Dendritic cell treated with granulocyte-macrophage colony-stimulating factor and Interleukin-4, amounts not matched to agents 40 ng/mL and 50 ng/mL, for 4 days (primary cell): ENCODE measurements at regions of chr16 and their contacts with region 1.

Region 1: GRCh38 chr16:29129514-29129913 is 144.7 kb downstream of the LAT start:
- H3K4me3 Mint-ChIP-seq: peak overlapping the region; percentile 23
- H3K27ac Mint-ChIP-seq: no peak overlapping the region
- H3K4me1 Mint-ChIP-seq: peaks cover 64% of the 10 kb centered on the region
- H3K27me3 Mint-ChIP-seq: peaks cover 45% of the 10 kb centered on the region

Region 2: GRCh38 chr16:29112755-29113347 is 16.7 kb before region 1 on chr16:
- intact Hi-C with region 1: loop called (anchors 1 kb)
- H3K4me3 Mint-ChIP-seq: no peak overlapping the region
- H3K27ac Mint-ChIP-seq: no peak overlapping the region
- H3K4me1 Mint-ChIP-seq: peaks cover 41% of the 10 kb centered on the region
- H3K27me3 Mint-ChIP-seq: peaks cover 23% of the 10 kb centered on the region

Region 3: GRCh38 chr16:29192325-29193247 is 63.1 kb after region 1 on chr16:
- intact Hi-C with region 1: loop called (anchors 5 kb)
- H3K4me3 Mint-ChIP-seq: no peak overlapping the region
- H3K27ac Mint-ChIP-seq: no peak overlapping the region
- H3K4me1 Mint-ChIP-seq: peaks cover 9% of the 10 kb centered on the region
- H3K27me3 Mint-ChIP-seq: peaks cover 49% of the 10 kb centered on the region

Region 4: GRCh38 chr16:29321585-29321984 is 192.1 kb after region 1 on chr16:
- intact Hi-C with region 1: no loop called
- H3K4me3 Mint-ChIP-seq: no peak overlapping the region
- H3K27ac Mint-ChIP-seq: no peak overlapping the region
- H3K4me1 Mint-ChIP-seq: peaks cover 34% of the 10 kb centered on the region
- H3K27me3 Mint-ChIP-seq: peaks cover 22% of the 10 kb centered on the region